Activated naive CD4-positive, alpha-beta T cell treated with anti-CD3 and anti-CD28 coated beads for 36 hours (primary cell): ENCODE measurements at regions of chr9 and their contacts with region 1.

Region 1: GRCh38 chr9:98034593-98035546 is 21.7 kb upstream of the NANS start:
- DNase-seq: peak; percentile 97
- H3K4me3 Mint-ChIP-seq: peak overlapping the region; percentile 33
- H3K27ac Mint-ChIP-seq: no peak overlapping the region
- H3K4me1 Mint-ChIP-seq: peaks cover 15% of the 10 kb centered on the region
- H3K27me3 Mint-ChIP-seq: no peaks in the 10 kb centered on the region

Region 2: GRCh38 chr9:97954550-97954989 is 80.3 kb before region 1 on chr9:
- CTCF ChIA-PET with region 1: interaction called, 15 read pairs
- intact Hi-C with region 1: no loop called
- DNase-seq: peak; percentile 75
- H3K4me3 Mint-ChIP-seq: no peak overlapping the region
- H3K27ac Mint-ChIP-seq: no peak overlapping the region
- H3K4me1 Mint-ChIP-seq: no peaks in the 10 kb centered on the region
- H3K27me3 Mint-ChIP-seq: no peaks in the 10 kb centered on the region

Region 3: DNA sequence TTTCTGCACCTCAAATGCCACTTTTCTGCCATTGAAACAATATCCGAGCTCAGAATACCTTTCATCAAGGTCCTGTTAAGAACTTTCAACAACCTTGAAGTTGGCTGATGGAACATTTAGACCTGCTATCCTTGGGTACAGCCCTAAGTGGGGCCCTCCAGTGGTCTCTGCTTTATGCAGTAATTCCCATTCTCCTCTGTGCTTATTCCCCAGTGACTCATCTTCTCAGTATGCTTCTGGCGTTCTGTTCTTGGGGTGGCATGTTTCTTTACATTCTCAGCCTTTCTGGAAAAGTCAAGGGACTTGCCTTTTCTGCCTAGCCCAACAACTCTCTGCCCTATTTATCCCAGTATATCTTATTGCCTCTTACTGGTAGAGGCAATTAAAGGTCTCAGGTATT is 44.6 kb before region 1 on chr9:
- CTCF ChIA-PET with region 1: interaction called, 3 read pairs
- intact Hi-C with region 1: loop called (anchors 2 kb)
- DNase-seq: no peak
- H3K4me3 Mint-ChIP-seq: no peak overlapping the region
- H3K27ac Mint-ChIP-seq: peak overlapping the region; percentile 68
- H3K4me1 Mint-ChIP-seq: peaks cover 81% of the 10 kb centered on the region
- H3K27me3 Mint-ChIP-seq: no peaks in the 10 kb centered on the region

Region 4: GRCh38 chr9:98010445-98010844 is 24.4 kb before region 1 on chr9:
- CTCF ChIA-PET with region 1: interaction called, 30 read pairs
- intact Hi-C with region 1: no loop called
- DNase-seq: peak; percentile 34
- H3K4me3 Mint-ChIP-seq: no peak overlapping the region
- H3K27ac Mint-ChIP-seq: no peak overlapping the region
- H3K4me1 Mint-ChIP-seq: peaks cover 27% of the 10 kb centered on the region
- H3K27me3 Mint-ChIP-seq: no peaks in the 10 kb centered on the region

Region 5: GRCh38 chr9:98045234-98046179 is 10.6 kb after region 1 on chr9:
- CTCF ChIA-PET with region 1: interaction called, 39 read pairs
- intact Hi-C with region 1: no loop called
- DNase-seq: peak; percentile 58
- H3K4me3 Mint-ChIP-seq: peak overlapping the region; percentile 84
- H3K27ac Mint-ChIP-seq: peak overlapping the region; percentile 90
- H3K4me1 Mint-ChIP-seq: peaks cover 42% of the 10 kb centered on the region
- H3K27me3 Mint-ChIP-seq: no peaks in the 10 kb centered on the region